Endothelial cell of umbilical vein (primary cell): ENCODE measurements at regions of chr18 and their contacts with region 1.

Region 1: DNA sequence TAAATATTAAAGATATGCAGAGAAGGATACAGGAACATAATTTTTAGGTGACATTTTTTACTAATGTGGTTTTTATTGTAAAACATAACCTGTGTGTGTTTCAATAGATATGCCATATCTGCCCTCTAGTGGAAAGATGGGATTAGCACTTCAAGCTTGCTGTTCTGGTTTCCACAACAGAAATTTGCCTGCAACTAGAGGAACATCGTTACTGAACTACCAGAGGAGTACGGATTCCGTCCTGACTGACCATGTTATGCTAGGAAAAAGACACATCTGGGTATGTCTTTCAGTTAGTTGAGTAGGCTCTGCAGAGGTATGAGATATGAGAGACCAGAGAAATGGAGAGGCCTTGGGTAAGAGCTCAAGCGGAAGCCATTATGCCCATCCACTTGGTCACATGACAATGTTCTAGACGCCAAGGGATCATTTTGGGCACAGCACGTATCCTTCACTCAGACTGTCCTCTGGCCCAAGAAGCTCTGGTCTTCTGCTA is 104.9 kb downstream of the MBD2 start:
- DNase-seq: peak; percentile 69
- H3K4me3 ChIP-seq: no peak overlapping the region
- H3K27ac ChIP-seq: no peak overlapping the region
- H3K4me1 ChIP-seq: no peaks in the 10 kb centered on the region
- H3K27me3 ChIP-seq: no peaks in the 10 kb centered on the region
- CTCF ChIP-seq: peak; percentile 59 to 64
- POLR2A ChIP-seq: no peak

Region 2: GRCh38 chr18:53567929-53568574 is 551.5 kb before region 1 on chr18:
- CTCF ChIA-PET with region 1: interaction called, 27 read pairs
- POLR2A ChIA-PET with region 1: no interaction called
- dilution Hi-C with region 1: no loop called
- intact Hi-C with region 1: loop called (anchors 1 kb)
- DNase-seq: peak; percentile 29
- H3K4me3 ChIP-seq: no peak overlapping the region
- H3K27ac ChIP-seq: no peak overlapping the region
- H3K4me1 ChIP-seq: no peaks in the 10 kb centered on the region
- H3K27me3 ChIP-seq: no peaks in the 10 kb centered on the region
- CTCF ChIP-seq: peak; percentile 16 to 36
- POLR2A ChIP-seq: no peak

Region 3: GRCh38 chr18:53909668-53910067 is 209.9 kb before region 1 on chr18:
- CTCF ChIA-PET with region 1: interaction called, 17 read pairs
- POLR2A ChIA-PET with region 1: no interaction called
- dilution Hi-C with region 1: no loop called
- intact Hi-C with region 1: loop called (anchors 2 kb)
- DNase-seq: no peak
- H3K4me3 ChIP-seq: no peak overlapping the region
- H3K27ac ChIP-seq: no peak overlapping the region
- H3K4me1 ChIP-seq: no peaks in the 10 kb centered on the region
- H3K27me3 ChIP-seq: no peaks in the 10 kb centered on the region
- CTCF ChIP-seq: peak in 1 of 2 donors; percentile 33
- POLR2A ChIP-seq: no peak

Region 4: DNA sequence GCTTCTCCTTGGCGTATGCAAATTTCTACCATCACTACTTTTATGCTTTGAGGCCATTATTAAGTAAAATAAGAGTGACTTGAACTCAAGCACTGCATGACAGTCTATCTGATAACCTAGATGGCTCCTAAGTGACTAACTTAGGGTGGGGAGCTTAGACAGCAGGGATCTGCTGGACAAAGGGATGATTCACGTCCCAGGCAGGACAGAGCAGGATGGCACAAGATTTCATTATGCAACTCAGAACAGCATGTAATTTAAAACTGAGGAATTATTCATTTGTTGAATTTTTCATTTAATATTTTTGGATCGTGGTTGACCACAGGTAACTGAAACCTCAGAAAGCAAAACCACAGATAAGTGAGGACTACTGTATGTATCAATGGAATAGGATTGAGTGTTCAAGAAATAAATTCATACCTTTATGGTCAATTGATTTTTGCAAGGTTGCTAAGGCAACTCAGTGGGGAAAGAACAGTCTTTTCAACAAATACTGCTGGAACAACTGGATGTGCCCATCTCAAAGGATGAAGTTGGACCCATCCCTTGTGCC is 10.4 kb before region 1 on chr18:
- CTCF ChIA-PET with region 1: interaction called, 20 read pairs
- POLR2A ChIA-PET with region 1: no interaction called
- dilution Hi-C with region 1: no loop called
- intact Hi-C with region 1: no loop called
- DNase-seq: no peak
- H3K4me3 ChIP-seq: no peak overlapping the region
- H3K27ac ChIP-seq: no peak overlapping the region
- H3K4me1 ChIP-seq: no peaks in the 10 kb centered on the region
- H3K27me3 ChIP-seq: peaks cover 0 to 1% of the 10 kb centered on the region in 2 experiments
- CTCF ChIP-seq: no peak
- POLR2A ChIP-seq: no peak

Region 5: GRCh38 chr18:54277899-54278298 is 158.3 kb after region 1 on chr18:
- CTCF ChIA-PET with region 1: no interaction called
- POLR2A ChIA-PET with region 1: no interaction called
- dilution Hi-C with region 1: no loop called
- intact Hi-C with region 1: no loop called
- DNase-seq: no peak
- H3K4me3 ChIP-seq: no peak overlapping the region
- H3K27ac ChIP-seq: no peak overlapping the region
- H3K4me1 ChIP-seq: no peaks in the 10 kb centered on the region
- H3K27me3 ChIP-seq: no peaks in the 10 kb centered on the region
- CTCF ChIP-seq: no peak
- POLR2A ChIP-seq: no peak

Region 6: GRCh38 chr18:54378057-54378456 is 258.5 kb after region 1 on chr18:
- CTCF ChIA-PET with region 1: no interaction called
- POLR2A ChIA-PET with region 1: no interaction called
- dilution Hi-C with region 1: no loop called
- intact Hi-C with region 1: no loop called
- DNase-seq: no peak
- H3K4me3 ChIP-seq: no peak overlapping the region
- H3K27ac ChIP-seq: no peak overlapping the region
- H3K4me1 ChIP-seq: peaks cover 8% of the 10 kb centered on the region
- H3K27me3 ChIP-seq: no peaks in the 10 kb centered on the region
- CTCF ChIP-seq: no peak
- POLR2A ChIP-seq: no peak

Region 7: DNA sequence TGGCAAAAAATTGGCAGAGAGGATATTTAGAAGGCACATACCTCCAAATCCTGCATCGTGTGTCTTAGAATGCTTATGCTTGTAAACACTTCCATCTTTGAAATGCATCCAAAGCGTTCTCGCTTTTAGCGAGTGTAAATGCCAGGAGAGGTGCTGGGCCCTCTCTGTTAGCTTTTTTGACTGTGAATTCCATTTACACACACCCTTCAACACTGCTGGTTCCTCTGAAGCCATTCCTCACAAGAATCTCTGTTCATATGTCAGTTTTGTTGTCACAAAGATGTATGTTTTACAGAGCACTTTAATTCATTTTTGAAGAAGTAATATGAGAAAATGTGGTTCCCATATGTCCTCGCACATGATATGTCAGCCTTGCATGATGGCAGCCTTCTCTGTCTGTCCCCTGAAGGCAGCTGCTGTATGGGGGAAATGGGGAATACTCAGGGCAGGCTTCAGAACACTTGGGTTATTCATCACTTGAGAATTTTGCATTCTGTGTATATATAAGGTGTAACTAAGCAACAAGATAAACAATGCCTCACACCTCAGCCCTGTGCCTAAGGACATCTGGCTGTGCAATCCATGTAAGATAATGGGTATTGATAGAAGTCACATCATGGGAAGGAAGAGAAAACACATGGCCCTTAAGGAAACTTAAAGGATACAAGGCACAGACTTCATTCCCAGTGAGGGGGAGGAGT is 761.0 kb after region 1 on chr18:
- CTCF ChIA-PET with region 1: no interaction called
- POLR2A ChIA-PET with region 1: no interaction called
- dilution Hi-C with region 1: no loop called
- intact Hi-C with region 1: no loop called
- DNase-seq: no peak
- H3K4me3 ChIP-seq: no peak overlapping the region
- H3K27ac ChIP-seq: no peak overlapping the region
- H3K4me1 ChIP-seq: no peaks in the 10 kb centered on the region
- H3K27me3 ChIP-seq: peaks cover 5 to 12% of the 10 kb centered on the region in 2 experiments
- CTCF ChIP-seq: no peak
- POLR2A ChIP-seq: no peak

Region 8: DNA sequence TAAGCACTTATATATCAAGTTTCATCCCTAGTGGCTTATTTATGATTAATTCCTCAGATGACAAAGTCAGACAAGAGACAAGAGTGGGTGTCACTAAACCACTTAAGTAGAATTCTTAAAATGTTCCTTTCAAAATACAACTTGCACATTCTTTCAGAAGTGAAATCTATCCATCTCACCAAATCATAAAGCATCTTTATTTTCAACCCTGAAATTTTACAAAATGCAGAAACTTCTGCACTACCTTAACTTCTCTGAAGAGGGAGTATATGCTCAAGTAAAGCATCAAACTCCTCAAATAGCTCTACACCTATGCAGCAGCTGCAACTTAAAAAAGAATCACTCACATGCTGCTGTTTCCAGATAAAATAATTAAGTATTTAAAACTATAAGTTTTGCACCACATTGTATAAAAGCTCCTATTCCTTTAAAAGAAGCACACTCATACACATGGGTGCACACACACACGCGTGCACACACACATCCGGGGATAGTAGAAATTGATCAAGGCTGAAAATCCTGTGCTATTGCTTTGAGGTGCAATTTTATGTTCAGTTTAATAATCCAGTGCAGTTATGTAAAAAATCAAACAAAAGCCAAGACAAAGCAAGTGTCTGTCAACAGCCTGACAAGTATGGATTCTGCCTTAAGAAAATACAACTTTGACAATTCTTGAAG is 1224.0 kb after region 1 on chr18:
- CTCF ChIA-PET with region 1: no interaction called
- POLR2A ChIA-PET with region 1: no interaction called
- dilution Hi-C with region 1: no loop called
- intact Hi-C with region 1: no loop called
- DNase-seq: peak; percentile 46
- H3K4me3 ChIP-seq: no peak overlapping the region
- H3K27ac ChIP-seq: no peak overlapping the region
- H3K4me1 ChIP-seq: peaks cover 26% of the 10 kb centered on the region
- H3K27me3 ChIP-seq: no peaks in the 10 kb centered on the region
- CTCF ChIP-seq: peak; percentile 9 to 24
- POLR2A ChIP-seq: no peak